ENCODE measurements at regions of chr11 and their contacts with region 1.

Region 1: GRCh38 chr11:7577291-7578190 is 63.7 kb downstream of the PPFIBP2 start:
- DNase-seq: peak; percentile 60 to 72 (median 61)
- H3K4me3 ChIP-seq: peak overlapping the region; percentile 29
- H3K27ac ChIP-seq: peak overlapping the region; percentile 86 to 88
- H3K4me1 ChIP-seq: peaks cover 34% of the 10 kb centered on the region
- H3K27me3 ChIP-seq: no peaks in the 10 kb centered on the region
- CTCF ChIP-seq: no peak
- EP300 ChIP-seq: no peak
- POLR2A ChIP-seq: no peak

Region 2: GRCh38 chr11:7612661-7613393 is 35.3 kb after region 1 on chr11:
- intact Hi-C with region 1: no loop called
- DNase-seq: no peak
- H3K4me3 ChIP-seq: no peak overlapping the region
- H3K27ac ChIP-seq: no peak overlapping the region
- H3K4me1 ChIP-seq: peaks cover 2% of the 10 kb centered on the region
- H3K27me3 ChIP-seq: no peaks in the 10 kb centered on the region
- CTCF ChIP-seq: no peak
- EP300 ChIP-seq: no peak
- POLR2A ChIP-seq: no peak

Region 3: GRCh38 chr11:7665473-7666291 is 88.1 kb after region 1 on chr11:
- intact Hi-C with region 1: loop called in 1 of 4 experiments (anchors 5 kb)
- DNase-seq: peak; percentile 76 to 85 (median 84)
- H3K4me3 ChIP-seq: no peak overlapping the region
- H3K27ac ChIP-seq: no peak overlapping the region
- H3K4me1 ChIP-seq: no peaks in the 10 kb centered on the region
- H3K27me3 ChIP-seq: no peaks in the 10 kb centered on the region
- CTCF ChIP-seq: peak; percentile 50 to 92 (median 82)
- EP300 ChIP-seq: no peak
- POLR2A ChIP-seq: no peak